Lower leg skin (tissue), 4 donors: ENCODE measurements at regions of chr9 and their contacts with region 1.

Region 1: DNA sequence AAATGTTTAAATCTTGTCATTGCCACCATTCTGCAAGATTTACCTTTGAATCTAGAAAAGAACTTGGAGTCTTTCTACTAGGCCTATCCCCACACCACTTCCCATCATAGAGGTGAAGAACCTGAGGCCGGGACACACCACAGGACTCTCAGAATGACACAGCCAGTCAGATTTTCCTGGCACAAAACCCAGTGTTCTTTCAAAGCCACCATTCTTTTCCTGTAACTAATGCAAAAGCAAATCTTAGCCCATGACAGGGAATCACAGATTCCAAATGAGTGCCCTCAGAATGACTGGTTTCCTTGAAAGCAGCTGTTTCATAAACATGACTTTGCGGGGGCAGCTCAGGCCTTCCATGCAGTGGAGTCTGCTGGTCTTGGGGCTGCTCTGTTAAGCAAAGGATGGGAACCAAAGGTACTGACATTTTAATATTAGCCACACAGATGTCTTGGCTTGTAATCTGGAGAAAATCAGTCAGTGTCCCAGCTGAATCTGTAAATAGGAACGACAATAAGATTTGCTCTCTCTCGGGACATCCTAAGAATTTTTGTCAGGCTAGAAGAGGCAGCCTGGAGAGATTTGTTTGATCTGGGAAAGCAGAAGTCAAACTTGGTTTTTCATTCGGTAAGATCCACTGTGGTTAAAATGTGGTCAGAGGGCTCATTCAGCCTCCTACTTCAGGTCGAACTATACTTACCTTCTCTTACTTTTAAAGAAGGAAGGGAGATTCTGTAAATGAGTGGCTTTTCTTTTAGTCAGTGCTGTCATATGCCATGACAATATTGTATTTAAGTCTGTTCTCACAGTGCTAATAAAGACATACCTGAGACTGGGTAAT is 115.1 kb downstream of the PALM2AKAP2 start:
- DNase-seq: no peak
- H3K4me3 ChIP-seq: no peak overlapping the region
- CTCF ChIP-seq: no peak
- POLR2A ChIP-seq: no peak

Region 2: DNA sequence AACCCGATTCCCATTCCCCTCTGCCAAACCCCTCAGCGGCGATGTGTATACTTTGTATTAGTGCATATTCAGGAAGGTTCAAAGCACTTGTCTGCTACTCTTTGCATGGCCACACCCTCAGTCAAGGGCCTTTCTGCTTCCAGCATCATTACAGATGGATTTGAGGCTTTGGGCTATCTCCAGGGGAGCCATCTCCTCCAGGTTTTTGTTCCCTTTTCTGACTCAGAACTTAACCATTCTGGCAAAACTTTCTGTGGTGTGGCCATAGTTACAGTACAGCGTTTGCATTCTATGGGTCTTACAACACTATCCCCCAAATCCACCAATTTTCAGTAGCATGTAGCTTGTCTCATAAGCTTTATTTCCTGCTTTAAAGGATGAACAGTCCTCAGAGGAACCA is 720.4 kb after region 1 on chr9:
- intact Hi-C with region 1: loop called (anchors 5 kb)
- DNase-seq: no peak
- H3K4me3 ChIP-seq: no peak overlapping the region
- CTCF ChIP-seq: no peak
- POLR2A ChIP-seq: no peak